ENCODE measurements at regions of chr20 and their contacts with region 1.

Region 1: DNA sequence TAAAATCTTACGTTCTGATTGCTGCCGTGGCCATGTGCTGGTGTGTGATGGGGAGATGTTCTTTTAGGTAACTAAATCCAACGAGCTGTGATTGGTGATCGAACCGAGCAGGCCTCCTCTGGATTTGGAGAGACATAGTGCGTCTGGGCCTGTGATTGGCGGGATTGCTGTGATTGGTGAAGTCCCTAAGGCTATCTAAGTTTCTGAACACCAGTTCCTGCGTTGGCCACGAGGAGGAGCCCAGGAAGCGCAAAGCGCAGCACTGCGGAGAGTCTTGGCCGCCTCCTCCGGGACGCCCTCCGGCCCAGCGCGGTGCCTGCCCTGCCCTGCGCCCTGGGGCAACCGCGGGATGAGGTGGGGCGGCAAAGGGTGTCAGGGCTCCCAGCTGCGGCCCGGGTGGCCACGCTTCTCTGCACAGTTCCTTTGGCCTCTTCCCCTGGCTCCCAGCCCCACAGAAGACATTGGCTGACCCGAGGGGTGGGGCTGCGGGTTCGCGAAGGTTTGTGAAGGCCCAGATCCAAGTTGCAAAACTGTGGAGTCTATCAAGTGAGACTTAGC is 33.0 kb downstream of the HNF4A start:
- DNase-seq: peak; percentile 63
- H3K4me3 ChIP-seq: no peak overlapping the region
- H3K27ac ChIP-seq: no peak overlapping the region
- H3K4me1 ChIP-seq: no peaks in the 10 kb centered on the region
- H3K27me3 ChIP-seq: peaks cover 1 to 2% of the 10 kb centered on the region in 2 experiments
- CTCF ChIP-seq: peak; percentile 76 to 81
- POLR2A ChIP-seq: no peak

Region 2: GRCh38 chr20:44115762-44116644 is 272.5 kb before region 1 on chr20:
- CTCF ChIA-PET with region 1: interaction called, 28 read pairs
- POLR2A ChIA-PET with region 1: no interaction called
- dilution Hi-C with region 1: no loop called
- intact Hi-C with region 1: loop called (anchors 5 kb)
- DNase-seq: no peak
- H3K4me3 ChIP-seq: no peak overlapping the region
- H3K27ac ChIP-seq: no peak overlapping the region
- H3K4me1 ChIP-seq: no peaks in the 10 kb centered on the region
- H3K27me3 ChIP-seq: peaks cover 6 to 11% of the 10 kb centered on the region in 2 experiments
- CTCF ChIP-seq: no peak
- POLR2A ChIP-seq: no peak

Region 3: GRCh38 chr20:44310664-44311639 is 77.6 kb before region 1 on chr20 and contains the start of gene FITM2:
- CTCF ChIA-PET with region 1: interaction called, 10 read pairs
- POLR2A ChIA-PET with region 1: no interaction called
- dilution Hi-C with region 1: no loop called
- intact Hi-C with region 1: no loop called
- DNase-seq: peak; percentile 96
- H3K4me3 ChIP-seq: peak within 1 kb of the TSS; percentile 37 to 71 (median 65)
- H3K27ac ChIP-seq: no peak within 1 kb of the TSS
- H3K4me1 ChIP-seq: peaks cover 8% of the 10 kb centered on the region
- H3K27me3 ChIP-seq: no peaks in the 10 kb centered on the region
- CTCF ChIP-seq: peak; percentile 99
- POLR2A ChIP-seq: peak; percentile 72
- total RNA-seq, gene FITM2: 6.8 and 7.7 TPM in 2 replicates

Region 4: DNA sequence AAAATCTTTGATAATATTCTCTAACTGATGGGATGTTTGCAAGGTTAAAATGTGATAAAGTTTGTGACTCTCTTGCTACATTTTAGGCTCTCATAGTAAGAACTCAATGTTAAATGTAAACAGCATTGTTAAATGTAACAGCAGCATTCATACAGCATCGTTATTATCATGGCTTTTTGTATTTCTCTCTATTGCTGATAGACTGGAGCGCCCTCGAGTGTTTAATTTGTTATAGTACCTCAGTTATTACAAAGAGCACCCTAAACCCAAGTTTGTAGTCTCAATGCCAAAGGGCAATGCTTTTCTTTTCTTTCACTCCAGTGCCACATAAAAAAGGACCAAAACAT is 72.2 kb after region 1 on chr20:
- CTCF ChIA-PET with region 1: interaction called, 12 read pairs
- POLR2A ChIA-PET with region 1: no interaction called
- dilution Hi-C with region 1: no loop called
- intact Hi-C with region 1: loop called (anchors 2 kb)
- DNase-seq: peak; percentile 16
- H3K4me3 ChIP-seq: no peak overlapping the region
- H3K27ac ChIP-seq: no peak overlapping the region
- H3K4me1 ChIP-seq: no peaks in the 10 kb centered on the region
- H3K27me3 ChIP-seq: no peaks in the 10 kb centered on the region
- CTCF ChIP-seq: peak; percentile 5 to 19
- POLR2A ChIP-seq: no peak

Region 5: DNA sequence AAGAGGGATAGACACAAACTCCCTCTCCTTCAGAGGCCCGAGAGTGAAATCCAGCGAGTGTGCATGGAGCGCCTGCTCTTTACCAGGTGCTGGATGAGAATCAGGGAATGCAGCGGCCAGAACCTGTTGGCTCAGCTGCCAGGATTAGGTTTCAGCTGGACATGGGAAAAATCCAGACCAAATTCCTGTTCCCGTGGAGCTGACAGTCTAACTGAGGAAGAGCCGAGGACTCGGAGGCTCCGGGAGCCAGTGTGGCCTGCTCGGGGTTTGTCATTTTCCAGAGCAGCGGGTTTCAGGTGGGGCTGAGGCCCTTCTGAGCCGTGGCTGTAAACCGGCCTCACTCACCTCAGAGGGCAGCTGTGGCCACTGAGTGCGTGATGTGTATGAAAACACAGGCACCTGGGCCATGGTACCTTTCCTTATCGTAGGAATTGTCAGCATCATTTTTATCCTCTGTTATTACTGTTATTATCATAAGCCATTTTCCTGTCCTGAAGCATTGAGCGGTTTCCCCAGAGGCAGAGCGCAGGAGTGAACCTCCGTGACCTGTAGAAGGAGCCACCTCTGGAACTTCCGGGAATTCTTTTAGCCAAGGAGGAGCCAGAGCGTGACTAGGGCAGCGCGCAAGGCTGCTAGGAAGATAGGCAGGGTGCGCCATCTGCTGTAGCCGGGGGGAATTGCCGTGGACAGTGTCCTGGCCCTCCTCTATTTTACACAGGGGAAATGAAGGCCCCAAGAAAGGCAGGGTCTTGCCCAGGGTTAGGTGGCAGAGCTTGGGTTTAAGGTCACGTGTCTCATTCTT is 221.2 kb after region 1 on chr20:
- CTCF ChIA-PET with region 1: interaction called, 17 read pairs
- POLR2A ChIA-PET with region 1: no interaction called
- dilution Hi-C with region 1: no loop called
- intact Hi-C with region 1: loop called (anchors 1 kb)
- DNase-seq: peak; percentile 91
- H3K4me3 ChIP-seq: no peak overlapping the region
- H3K27ac ChIP-seq: peak overlapping the region; percentile 53
- H3K4me1 ChIP-seq: peaks cover 16% of the 10 kb centered on the region
- H3K27me3 ChIP-seq: no peaks in the 10 kb centered on the region
- CTCF ChIP-seq: peak; percentile 97 to 98
- POLR2A ChIP-seq: no peak

Region 6: DNA sequence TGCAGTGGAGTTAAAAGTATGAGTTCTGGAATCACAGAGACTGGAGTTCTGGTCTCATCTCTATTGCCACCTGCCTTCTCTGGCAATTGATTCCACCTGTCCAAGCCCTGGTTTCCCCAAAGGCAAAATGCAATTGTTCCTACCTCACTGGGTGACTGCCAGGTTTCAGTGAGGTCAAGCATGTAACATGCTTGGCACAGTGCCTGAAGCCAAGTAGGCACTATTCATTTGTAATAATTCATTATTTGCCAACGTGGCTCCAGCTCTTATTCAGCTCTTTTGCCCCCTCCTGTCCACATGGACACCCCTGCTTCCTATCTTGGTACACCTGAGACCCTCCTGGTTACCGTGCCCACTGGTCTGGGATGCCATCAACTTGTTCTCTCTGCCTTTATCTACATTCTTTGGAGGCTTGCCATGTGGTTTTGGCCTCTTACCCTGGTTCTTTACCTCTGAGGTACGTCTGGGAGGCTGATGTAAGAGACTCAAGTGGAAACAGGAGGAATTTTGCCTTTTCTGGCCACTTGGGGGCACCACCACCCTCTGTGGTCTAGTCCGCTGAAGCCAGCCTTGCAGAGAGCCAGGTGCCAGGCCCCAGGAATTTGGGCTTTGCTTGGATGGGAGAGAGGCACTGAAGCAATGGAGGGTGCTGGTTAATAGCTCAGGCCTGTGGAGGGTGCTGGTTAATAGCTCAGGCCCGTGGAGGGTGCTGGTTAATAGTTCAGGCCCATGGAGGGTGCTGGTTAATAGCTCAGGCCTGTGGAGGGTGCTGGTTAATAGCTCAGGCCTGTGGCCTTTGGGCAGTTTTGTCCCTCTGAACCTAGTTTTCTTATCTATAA is 358.8 kb after region 1 on chr20:
- CTCF ChIA-PET with region 1: no interaction called
- POLR2A ChIA-PET with region 1: no interaction called
- dilution Hi-C with region 1: no loop called
- intact Hi-C with region 1: loop called (anchors 5 kb)
- DNase-seq: peak; percentile 63
- H3K4me3 ChIP-seq: no peak overlapping the region
- H3K27ac ChIP-seq: no peak overlapping the region
- H3K4me1 ChIP-seq: peaks cover 4% of the 10 kb centered on the region
- H3K27me3 ChIP-seq: peaks cover 11 to 15% of the 10 kb centered on the region in 2 experiments
- CTCF ChIP-seq: peak; percentile 70 to 79
- POLR2A ChIP-seq: no peak